ENCODE measurements at regions of chr21 and their contacts with region 1.

Region 1: DNA sequence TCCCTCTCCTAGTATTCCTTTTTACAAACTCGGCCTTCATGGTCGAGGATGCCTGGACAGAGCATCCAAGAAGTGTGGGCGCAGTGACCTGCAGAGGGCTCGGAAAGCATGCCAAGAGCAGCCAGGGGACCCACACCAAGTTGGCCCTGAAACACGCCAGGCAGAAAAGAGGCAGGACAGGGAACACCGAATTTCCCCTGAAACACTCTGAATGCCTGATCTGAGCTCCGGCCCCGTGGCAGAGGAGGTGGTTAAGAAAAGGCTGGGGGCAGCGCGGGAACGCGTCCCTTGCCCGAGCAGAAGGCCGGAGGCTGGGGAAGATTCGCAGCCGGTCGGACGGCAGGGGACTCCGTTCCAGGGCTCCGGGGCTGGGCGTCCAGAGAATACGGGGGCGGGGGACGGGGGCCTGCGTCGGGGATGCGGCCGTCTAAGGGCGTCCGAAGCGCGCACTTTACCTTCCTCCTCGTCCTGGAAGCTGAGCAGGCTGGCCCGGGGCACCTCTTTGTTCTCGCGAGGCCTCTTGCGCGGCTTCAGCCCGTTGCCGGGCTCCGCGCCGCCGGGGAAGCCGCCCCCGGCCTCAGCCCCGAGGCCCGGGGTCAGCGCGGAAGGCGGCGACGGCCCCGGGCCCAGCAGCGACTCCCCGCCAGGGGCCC is 558 bp downstream of the PAXBP1 start:
- DNase-seq: peak; percentile 84
- H3K4me3 ChIP-seq: peak overlapping the region; percentile 74 to 94 (median 90)
- H3K27ac ChIP-seq: peak overlapping the region; percentile 92 to 97 (median 93)
- H3K4me1 ChIP-seq: peaks cover 0 to 53% (median 39%) of the 10 kb centered on the region in 4 donors
- H3K27me3 ChIP-seq: no peaks in the 10 kb centered on the region
- CTCF ChIP-seq: no peak
- EP300 ChIP-seq: no peak
- POLR2A ChIP-seq: no peak

Region 2: DNA sequence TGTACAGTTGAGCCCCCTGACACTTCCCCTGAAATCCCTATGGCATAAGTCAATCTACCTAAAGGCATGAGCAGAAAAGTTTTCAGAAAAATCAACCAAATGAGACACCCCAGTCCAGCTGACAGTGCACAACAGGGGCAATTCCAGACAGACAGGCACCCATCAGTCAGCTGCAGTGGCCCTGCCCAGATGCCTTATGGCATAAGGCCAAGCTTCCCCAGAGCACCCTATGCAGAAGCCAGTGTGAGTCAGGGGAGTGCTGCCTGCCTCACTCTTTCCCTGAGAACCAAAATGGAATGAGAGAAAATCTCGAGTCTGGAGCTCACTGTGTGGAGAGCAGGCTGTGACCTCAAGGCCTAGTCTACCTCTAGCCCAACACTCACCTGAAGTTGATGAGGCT is 434.3 kb before region 1 on chr21:
- intact Hi-C with region 1: no loop called
- DNase-seq: no peak
- H3K4me3 ChIP-seq: no peak overlapping the region
- H3K27ac ChIP-seq: peak overlapping the region in 2 of 4 donors; percentile 12 to 39
- H3K4me1 ChIP-seq: no peaks in the 10 kb centered on the region
- H3K27me3 ChIP-seq: no peaks in the 10 kb centered on the region
- CTCF ChIP-seq: no peak
- EP300 ChIP-seq: no peak
- POLR2A ChIP-seq: no peak

Region 3: GRCh38 chr21:32716486-32716885 is 54.5 kb before region 1 on chr21:
- intact Hi-C with region 1: no loop called
- DNase-seq: no peak
- H3K4me3 ChIP-seq: no peak overlapping the region
- H3K27ac ChIP-seq: no peak overlapping the region
- H3K4me1 ChIP-seq: peaks cover 0 to 11% (median 0%) of the 10 kb centered on the region in 4 donors
- H3K27me3 ChIP-seq: no peaks in the 10 kb centered on the region
- CTCF ChIP-seq: no peak
- EP300 ChIP-seq: no peak
- POLR2A ChIP-seq: no peak

Region 4: GRCh38 chr21:32727687-32728455 is 43.1 kb before region 1 on chr21 and contains the start of gene SYNJ1:
- intact Hi-C with region 1: loop called (anchors 2 kb)
- DNase-seq: peak; percentile 98
- H3K4me3 ChIP-seq: peak within 1 kb of the TSS; percentile 71 to 96 (median 92)
- H3K27ac ChIP-seq: peak within 1 kb of the TSS; percentile 89 to 96 (median 94)
- H3K4me1 ChIP-seq: peaks cover 0 to 19% (median 15%) of the 10 kb centered on the region in 4 donors
- H3K27me3 ChIP-seq: no peaks in the 10 kb centered on the region
- CTCF ChIP-seq: peak in 1 of 4 experiments; percentile 10
- EP300 ChIP-seq: peak in 1 of 4 donors; percentile 18
- POLR2A ChIP-seq: peak; percentile 73 to 75
- total RNA-seq, gene SYNJ1: 4.9 to 12.0 (median 9.3) TPM

Region 5: DNA sequence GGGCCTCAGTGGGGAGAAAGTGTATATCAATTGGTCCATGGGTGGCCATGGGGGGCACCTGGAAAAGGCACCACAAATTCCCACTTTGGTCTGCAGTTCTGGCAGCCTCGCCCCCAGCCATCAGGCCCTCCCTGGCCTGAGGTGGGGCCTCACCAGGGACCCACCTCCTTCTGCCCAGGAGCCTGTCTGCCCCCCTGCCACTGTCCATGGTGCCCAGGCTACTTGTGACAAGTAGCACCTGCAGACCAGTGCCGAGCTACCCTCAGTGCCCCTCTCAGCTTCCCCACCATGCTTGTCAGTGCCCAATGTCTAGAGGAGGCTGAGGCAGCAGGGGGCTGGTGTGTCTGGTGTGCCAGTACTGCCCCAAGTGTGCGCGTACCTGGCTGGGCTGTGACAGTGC is 87.6 kb after region 1 on chr21:
- intact Hi-C with region 1: no loop called
- DNase-seq: no peak
- H3K4me3 ChIP-seq: no peak overlapping the region
- H3K27ac ChIP-seq: no peak overlapping the region
- H3K4me1 ChIP-seq: no peaks in the 10 kb centered on the region
- H3K27me3 ChIP-seq: peaks cover 0 to 6% (median 3%) of the 10 kb centered on the region in 3 donors
- CTCF ChIP-seq: no peak
- EP300 ChIP-seq: no peak
- POLR2A ChIP-seq: no peak

Region 6: GRCh38 chr21:33036430-33037162 is 265.6 kb after region 1 on chr21:
- intact Hi-C with region 1: no loop called
- DNase-seq: peak; percentile 68
- H3K4me3 ChIP-seq: no peak overlapping the region
- H3K27ac ChIP-seq: no peak overlapping the region
- H3K4me1 ChIP-seq: no peaks in the 10 kb centered on the region
- H3K27me3 ChIP-seq: peaks cover 0 to 71% (median 47%) of the 10 kb centered on the region in 3 donors
- CTCF ChIP-seq: no peak
- EP300 ChIP-seq: no peak
- POLR2A ChIP-seq: no peak

Region 7: DNA sequence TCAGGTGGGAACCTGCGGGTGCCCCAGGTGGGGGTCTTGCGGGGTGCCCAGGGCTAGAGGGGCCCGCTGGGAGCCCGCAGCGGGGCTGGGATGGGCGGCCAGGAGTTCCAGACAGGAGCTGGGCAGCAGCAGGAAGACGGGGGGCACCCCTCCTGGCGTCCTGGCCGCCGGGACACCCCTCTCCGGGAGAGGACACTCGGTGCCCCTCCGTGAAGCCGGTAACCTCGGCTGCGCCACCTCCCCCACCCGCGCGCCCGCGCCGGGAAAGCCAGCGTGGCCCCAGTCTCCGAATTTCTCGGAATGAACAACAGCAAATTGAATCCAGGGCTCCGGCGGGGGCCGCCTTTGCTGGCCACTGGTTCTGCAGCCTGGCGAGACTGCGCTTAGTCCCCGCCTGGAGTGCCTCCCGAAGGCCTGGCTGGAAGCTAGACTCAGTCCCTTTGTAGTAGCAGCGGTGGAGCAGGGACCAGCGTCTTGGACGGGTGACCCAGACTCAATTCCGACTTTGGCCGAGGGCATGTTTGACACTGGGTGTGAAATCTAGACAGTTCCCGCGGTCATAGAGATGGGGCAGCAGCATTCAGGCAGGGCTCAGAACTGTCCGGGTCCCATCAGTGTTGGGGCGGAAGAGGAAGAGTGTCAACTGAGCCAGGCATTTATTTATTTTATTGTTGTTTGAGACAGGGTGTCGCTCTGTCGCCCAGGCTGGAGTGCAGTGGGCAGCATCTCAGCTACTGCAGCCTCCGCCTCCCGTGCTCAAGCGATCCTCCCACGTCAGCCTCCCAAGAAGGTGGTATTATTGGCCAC is 633.0 kb after region 1 on chr21:
- intact Hi-C with region 1: loop called (anchors 5 kb)
- DNase-seq: peak; percentile 83
- H3K4me3 ChIP-seq: peak overlapping the region; percentile 61 to 85 (median 78)
- H3K27ac ChIP-seq: peak overlapping the region; percentile 84 to 94 (median 90)
- H3K4me1 ChIP-seq: peaks cover 0 to 40% (median 30%) of the 10 kb centered on the region in 4 donors
- H3K27me3 ChIP-seq: no peaks in the 10 kb centered on the region
- CTCF ChIP-seq: no peak
- EP300 ChIP-seq: no peak
- POLR2A ChIP-seq: peak; percentile 17 to 22